Common myeloid progenitor, CD34-positive (primary cell): ENCODE measurements at regions of chr7 and their contacts with region 1.

Region 1: GRCh38 chr7:135260930-135261721 is 27.5 kb downstream of the STRA8 start:
- DNase-seq: no peak
- H3K4me3 ChIP-seq: no peak overlapping the region
- H3K27ac ChIP-seq: no peak overlapping the region
- H3K4me1 ChIP-seq: no peaks in the 10 kb centered on the region
- H3K27me3 ChIP-seq: peaks cover 0 to 2% (median 0%) of the 10 kb centered on the region in 5 experiments

Region 2: DNA sequence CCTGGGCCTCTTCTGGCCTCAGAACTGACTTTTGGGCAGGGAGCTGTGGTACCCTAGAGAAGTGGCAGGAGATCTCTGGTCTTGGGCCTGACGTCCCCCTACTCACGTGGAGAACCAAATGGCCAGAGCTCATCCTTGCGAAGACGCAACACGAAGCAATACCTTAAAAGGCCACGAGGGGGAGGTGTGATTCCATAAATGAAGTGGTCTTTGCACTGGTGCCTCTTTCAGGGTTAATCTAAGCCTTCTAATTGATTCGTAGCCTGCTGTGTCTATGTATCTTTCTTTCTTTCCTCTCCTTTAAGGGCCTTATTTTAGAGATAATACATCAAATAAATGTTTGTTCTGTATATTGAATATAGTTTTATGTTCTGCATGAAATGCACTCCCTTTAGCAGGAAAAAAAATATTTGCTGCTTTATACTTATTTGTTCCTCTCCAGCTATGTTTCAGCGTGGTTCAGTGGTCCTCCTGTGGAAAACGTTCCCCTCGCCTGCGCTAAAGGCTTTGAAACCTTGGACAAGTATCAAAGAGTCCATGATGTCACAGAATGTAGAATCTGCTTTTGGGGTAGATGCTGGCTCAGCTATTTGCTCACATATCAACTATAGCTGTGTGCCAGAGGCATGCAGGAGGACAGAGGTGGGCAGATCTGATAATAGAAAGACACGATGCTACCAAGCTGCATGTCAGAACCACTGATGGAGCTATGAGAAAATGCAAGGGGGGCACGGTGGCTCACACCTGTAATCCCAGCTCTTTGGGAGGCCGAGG is 13.6 kb after region 1 on chr7:
- CTCF ChIA-PET with region 1: interaction called, 31 read pairs
- POLR2A ChIA-PET with region 1: no interaction called
- DNase-seq: peak; percentile 76 to 88 (median 80)
- H3K4me3 ChIP-seq: no peak overlapping the region
- H3K27ac ChIP-seq: no peak overlapping the region
- H3K4me1 ChIP-seq: no peaks in the 10 kb centered on the region
- H3K27me3 ChIP-seq: peaks cover 0 to 5% (median 0%) of the 10 kb centered on the region in 5 experiments